ENCODE measurements at regions of chr4 and their contacts with region 1.

Region 1: DNA sequence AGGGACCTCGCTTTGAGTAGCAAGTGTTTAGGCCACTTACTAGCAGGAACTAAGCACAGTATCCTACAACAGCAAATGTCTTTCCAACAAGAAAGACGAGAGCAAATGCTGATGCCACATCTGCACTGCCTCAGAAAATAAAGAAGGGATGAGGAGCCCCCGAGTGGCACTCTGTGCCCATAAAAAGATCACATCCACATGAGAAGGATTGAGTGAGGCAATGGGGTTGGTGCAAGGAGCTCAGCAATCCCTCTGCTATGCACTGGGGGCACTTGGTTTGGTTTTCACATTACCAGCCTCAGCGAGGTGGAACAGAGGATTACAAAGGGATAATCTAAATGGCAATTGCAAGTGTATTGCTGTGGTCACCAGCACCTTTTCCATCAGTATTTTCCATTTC is 252.8 kb upstream of the SLC7A11 start:
- DNase-seq: peak in 1 of 3 donors; percentile 13
- ATAC-seq: peak in 1 of 2 donors; percentile 52
- H3K4me3 ChIP-seq: no peak overlapping the region
- H3K27ac ChIP-seq: no peak overlapping the region
- H3K4me1 ChIP-seq: no peaks in the 10 kb centered on the region
- H3K27me3 ChIP-seq: no peaks in the 10 kb centered on the region

Region 2: GRCh38 chr4:138090150-138090917 is 404.6 kb before region 1 on chr4:
- intact Hi-C with region 1: loop called in 1 of 4 experiments (anchors 5 kb)
- DNase-seq: peak in 1 of 3 donors; percentile 46
- ATAC-seq: peak; percentile 83 to 85
- H3K4me3 ChIP-seq: no peak overlapping the region
- H3K27ac ChIP-seq: no peak overlapping the region
- H3K4me1 ChIP-seq: no peaks in the 10 kb centered on the region
- H3K27me3 ChIP-seq: no peaks in the 10 kb centered on the region

Region 3: GRCh38 chr4:138199568-138200235 is 295.2 kb before region 1 on chr4:
- intact Hi-C with region 1: loop called in 1 of 4 experiments (anchors 10 kb)
- DNase-seq: no peak
- ATAC-seq: peak in 1 of 2 donors; percentile 71
- H3K4me3 ChIP-seq: no peak overlapping the region
- H3K27ac ChIP-seq: peak overlapping the region; percentile 25
- H3K4me1 ChIP-seq: peaks cover 2% of the 10 kb centered on the region
- H3K27me3 ChIP-seq: no peaks in the 10 kb centered on the region

Measured in right cardiac atrium (tissue), 5 donors.